Dorsolateral prefrontal cortex (tissue), 120 donors: ENCODE measurements at regions of chr1 and their contacts with region 1.

Region 1: DNA sequence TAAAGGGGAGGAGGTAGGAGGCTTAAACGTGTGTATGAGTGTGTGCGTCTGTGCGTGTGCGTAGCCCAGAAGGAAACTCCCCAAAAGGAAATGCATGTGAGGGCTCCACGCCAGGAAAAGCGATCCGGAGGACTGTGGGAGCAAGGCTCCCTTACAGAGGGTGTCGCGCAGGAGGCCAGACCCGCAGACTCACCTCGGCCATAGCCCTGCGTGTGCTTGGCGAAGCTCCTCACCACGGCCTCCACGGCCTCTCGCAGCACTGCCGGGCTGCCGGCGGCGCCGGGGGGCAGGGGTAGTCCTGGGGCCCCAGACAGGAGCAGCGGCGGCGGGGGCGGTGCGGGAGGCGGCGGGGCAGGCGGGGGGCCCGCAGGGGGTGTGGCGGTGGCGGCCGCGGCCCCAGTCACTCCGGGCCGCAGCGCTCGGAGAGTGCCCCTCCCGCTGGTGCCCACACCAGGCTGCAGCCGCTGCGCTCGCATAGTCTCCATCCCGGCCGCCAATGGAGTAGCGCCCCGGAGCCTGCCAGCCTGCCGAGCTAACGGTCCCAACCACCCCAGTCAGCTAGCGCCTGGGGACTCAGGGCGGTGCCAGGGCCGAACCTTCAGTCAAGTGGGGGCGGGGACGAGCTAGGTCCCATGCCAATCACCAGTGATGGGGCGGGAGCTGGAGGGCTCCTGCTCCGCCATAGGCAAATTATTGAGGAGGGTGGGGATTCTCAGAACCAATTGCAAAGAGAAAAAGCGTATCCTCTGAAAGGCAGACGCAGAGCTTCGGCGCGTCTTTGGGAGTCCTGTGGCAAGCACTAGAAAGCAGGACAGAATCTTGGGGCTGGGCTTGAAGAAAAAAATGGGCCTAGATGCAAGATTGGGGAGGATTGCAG is at the start of gene LIX1L:
- DNase-seq: peak; percentile 91 to 98 (median 97)
- H3K4me3 ChIP-seq: peak within 1 kb of the TSS; percentile 55 to 95 (median 79)
- H3K27ac ChIP-seq: peak within 1 kb of the TSS; percentile 57 to 99 (median 96)
- H3K27me3 ChIP-seq: no peaks in the 10 kb centered on the region
- CTCF ChIP-seq: peak in 29 of 56 donors; percentile 5 to 55 (median 21)
- total RNA-seq, gene LIX1L: 10.5 to 32.8 (median 17.8) TPM

Region 2: GRCh38 chr1:145918144-145918992 is 39.3 kb before region 1 on chr1 and contains the start of gene PEX11B:
- intact Hi-C with region 1: loop called (anchors 2 kb)
- DNase-seq: peak; percentile 84 to 93 (median 89)
- H3K4me3 ChIP-seq: peak within 1 kb of the TSS; percentile 52 to 99 (median 91)
- H3K27ac ChIP-seq: peak within 1 kb of the TSS; percentile 46 to 98 (median 93)
- H3K27me3 ChIP-seq: no peaks in the 10 kb centered on the region
- CTCF ChIP-seq: peak in 13 of 56 donors; percentile 2 to 47 (median 15)
- total RNA-seq, gene PEX11B: 25.0 to 72.0 (median 54.2) TPM

Region 3: DNA sequence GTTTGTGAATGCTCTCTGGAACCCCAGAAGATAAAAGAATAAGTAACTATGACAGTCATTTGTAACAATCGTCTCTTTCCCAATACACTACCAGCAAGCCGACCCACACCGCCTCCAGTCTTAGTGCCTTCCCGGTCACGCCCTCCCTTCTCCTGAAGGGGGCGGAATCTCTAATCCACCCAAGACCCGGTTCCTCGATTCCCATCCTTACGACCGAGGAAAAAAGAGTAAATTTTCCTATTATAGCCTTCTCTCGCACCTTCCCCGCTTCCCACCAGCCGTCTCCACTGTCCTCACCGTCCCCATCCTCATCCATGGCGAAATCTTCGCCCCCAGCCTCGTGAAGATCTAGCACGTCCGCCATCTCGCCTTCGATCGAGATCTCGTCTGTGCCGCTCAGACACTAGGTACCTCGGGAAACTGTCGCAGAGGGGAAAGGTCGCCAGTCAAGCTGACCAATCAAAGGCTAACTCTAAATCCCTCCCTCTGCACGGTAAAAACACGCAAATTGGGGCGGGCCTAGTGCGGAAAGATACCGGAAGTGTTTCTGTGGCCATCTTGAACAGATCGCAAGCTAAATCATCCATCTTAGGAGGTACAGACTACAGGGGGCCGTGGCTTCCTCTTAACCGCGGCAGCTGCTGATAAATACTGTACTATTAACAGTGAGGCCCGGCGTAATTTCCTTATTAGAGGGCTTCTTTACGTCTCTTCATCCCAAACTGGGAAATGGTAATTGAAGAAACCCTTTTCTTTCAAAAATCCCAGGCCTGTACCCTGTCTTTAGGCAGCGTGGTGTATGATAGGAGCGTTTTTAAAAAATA is 30.4 kb before region 1 on chr1 and contains the start of gene RBM8A:
- intact Hi-C with region 1: loop called (anchors 2 kb)
- DNase-seq: peak; percentile 75 to 99 (median 94)
- H3K4me3 ChIP-seq: peak within 1 kb of the TSS; percentile 47 to 94 (median 80)
- H3K27ac ChIP-seq: peak within 1 kb of the TSS; percentile 84 to 100 (median 98)
- H3K27me3 ChIP-seq: no peaks in the 10 kb centered on the region
- CTCF ChIP-seq: peak in 55 of 56 donors; percentile 10 to 80 (median 58)
- total RNA-seq, gene RBM8A: 68.5 to 111 (median 91.1) TPM